IMR-90 (cell line): ENCODE measurements at regions of chr11 and their contacts with region 1.

Region 1: DNA sequence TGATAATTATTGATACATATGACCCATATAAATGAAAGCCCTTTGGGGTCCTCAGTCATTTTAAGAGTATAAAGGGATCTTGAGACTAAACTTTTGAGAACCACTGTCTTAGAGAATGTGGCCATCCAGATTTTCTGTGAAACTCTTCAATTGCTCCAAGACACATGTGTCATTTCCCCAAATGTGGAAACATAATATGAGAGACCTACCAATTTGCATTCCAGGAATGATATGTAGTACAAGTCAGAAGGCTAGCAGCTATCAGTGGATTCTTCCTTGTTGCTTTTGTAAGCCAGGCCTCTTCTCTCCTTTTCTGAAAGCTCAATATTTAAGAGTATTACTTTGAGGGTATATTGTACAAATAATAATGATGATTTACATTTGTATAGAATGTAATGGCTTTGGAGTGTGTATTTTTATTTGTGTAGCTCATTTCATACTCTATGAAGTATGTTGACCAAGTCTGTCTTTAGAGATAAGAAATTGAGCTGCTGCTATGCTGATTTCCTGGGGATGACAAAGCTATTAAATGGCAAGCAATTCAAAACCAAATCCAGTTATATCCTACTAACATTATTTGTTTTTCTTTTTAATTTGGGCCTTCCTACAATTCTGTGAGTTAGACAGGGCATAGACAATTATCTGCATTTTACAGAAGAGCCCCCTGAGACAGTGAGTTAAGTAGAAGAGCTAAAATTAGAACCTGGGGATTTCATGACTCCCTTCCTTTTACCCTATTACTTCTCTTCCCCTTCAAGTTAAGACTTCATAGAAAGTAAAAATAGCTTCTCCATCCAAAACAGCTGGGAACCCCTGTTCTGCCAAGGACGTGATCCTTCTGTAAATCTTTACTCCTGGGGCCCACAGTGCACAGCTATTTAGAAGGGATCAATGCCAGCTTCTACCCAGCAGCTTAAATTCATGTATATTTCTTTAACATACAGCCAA is 131.9 kb downstream of the WNT11 start:
- DNase-seq: peak; percentile 60
- ATAC-seq: peak; percentile 81
- H3K4me3 ChIP-seq: no peak overlapping the region
- H3K27ac ChIP-seq: peak overlapping the region; percentile 64; the same call in 1 of the 2 replicates
- H3K4me1 ChIP-seq: peaks cover 14% of the 10 kb centered on the region
- H3K27me3 ChIP-seq: no peaks in the 10 kb centered on the region
- CTCF ChIP-seq: no peak
- POLR2A ChIP-seq: no peak
- RAD21 ChIP-seq: no peak

Region 2: DNA sequence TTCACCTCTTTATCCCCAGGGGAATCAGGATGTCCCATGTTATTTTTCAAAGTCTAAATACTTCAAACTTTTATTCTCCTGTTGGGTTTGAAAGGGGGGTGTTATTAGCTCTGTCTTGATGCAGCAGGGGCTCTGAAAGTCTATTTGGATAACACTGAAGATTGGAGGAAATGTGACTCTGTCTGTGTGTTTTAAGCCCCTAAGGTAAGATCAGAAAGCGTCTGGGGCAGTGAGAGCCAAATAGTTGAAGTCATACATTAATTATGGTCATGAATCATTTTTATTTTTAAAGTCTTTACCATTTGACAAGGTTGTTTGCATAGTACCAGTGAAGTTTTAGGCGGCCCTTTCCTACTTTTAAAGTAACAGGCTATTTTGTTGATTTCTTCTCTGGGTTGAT is 120.4 kb before region 1 on chr11:
- CTCF ChIA-PET with region 1: no interaction called
- POLR2A ChIA-PET with region 1: no interaction called
- dilution Hi-C with region 1: no loop called
- in situ Hi-C with region 1: no loop called
- intact Hi-C with region 1: no loop called
- DNase-seq: no peak
- ATAC-seq: no peak
- H3K4me3 ChIP-seq: no peak overlapping the region
- H3K27ac ChIP-seq: no peak overlapping the region
- H3K4me1 ChIP-seq: no peaks in the 10 kb centered on the region
- H3K27me3 ChIP-seq: no peaks in the 10 kb centered on the region
- CTCF ChIP-seq: no peak
- POLR2A ChIP-seq: no peak
- RAD21 ChIP-seq: no peak

Region 3: DNA sequence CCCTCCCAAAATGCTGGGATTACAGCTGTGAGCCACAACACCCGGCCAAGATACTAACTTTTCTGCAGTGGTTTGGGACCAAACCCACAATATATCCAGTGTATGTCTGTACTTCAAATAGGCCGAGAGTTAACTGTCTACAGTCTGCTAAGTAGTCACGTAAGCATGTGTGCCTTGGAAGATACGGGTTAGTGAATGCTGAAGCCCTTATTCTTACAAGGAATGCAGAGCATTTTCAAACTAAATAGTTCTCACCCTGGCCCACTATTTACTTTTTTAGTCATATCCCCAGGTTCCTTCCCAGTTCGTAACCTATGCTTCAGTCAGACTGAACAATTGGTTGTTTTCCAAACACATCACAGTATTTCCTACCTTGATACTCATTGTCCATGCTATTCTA is 44.1 kb before region 1 on chr11:
- CTCF ChIA-PET with region 1: interaction called, 3 read pairs
- POLR2A ChIA-PET with region 1: no interaction called
- dilution Hi-C with region 1: no loop called
- in situ Hi-C with region 1: no loop called
- intact Hi-C with region 1: loop called (anchors 5 kb)
- DNase-seq: peak; percentile 70
- ATAC-seq: peak; percentile 67
- H3K4me3 ChIP-seq: no peak overlapping the region
- H3K27ac ChIP-seq: no peak overlapping the region
- H3K4me1 ChIP-seq: peaks cover 10% of the 10 kb centered on the region
- H3K27me3 ChIP-seq: no peaks in the 10 kb centered on the region
- CTCF ChIP-seq: no peak
- POLR2A ChIP-seq: no peak
- RAD21 ChIP-seq: no peak